MCF 10A (cell line): ENCODE measurements at regions of chr12 and their contacts with region 1.

Region 1: GRCh38 chr12:8544295-8544694 is 3.6 kb upstream of the CLEC4E start:
- DNase-seq: peak; percentile 56
- H3K4me3 Mint-ChIP-seq: no peak overlapping the region
- H3K27ac Mint-ChIP-seq: no peak overlapping the region
- H3K4me1 Mint-ChIP-seq: no peaks in the 10 kb centered on the region
- H3K27me3 Mint-ChIP-seq: peaks cover 58% of the 10 kb centered on the region
- CTCF ChIP-seq: peak; percentile 84

Region 2: GRCh38 chr12:8554451-8555195 is 10.3 kb after region 1 on chr12:
- CTCF ChIA-PET with region 1: interaction called, 19 read pairs
- POLR2A ChIA-PET with region 1: no interaction called
- intact Hi-C with region 1: no loop called
- DNase-seq: peak; percentile 35
- H3K4me3 Mint-ChIP-seq: no peak overlapping the region
- H3K27ac Mint-ChIP-seq: no peak overlapping the region
- H3K4me1 Mint-ChIP-seq: peaks cover 6% of the 10 kb centered on the region
- H3K27me3 Mint-ChIP-seq: no peaks in the 10 kb centered on the region
- CTCF ChIP-seq: no peak

Region 3: DNA sequence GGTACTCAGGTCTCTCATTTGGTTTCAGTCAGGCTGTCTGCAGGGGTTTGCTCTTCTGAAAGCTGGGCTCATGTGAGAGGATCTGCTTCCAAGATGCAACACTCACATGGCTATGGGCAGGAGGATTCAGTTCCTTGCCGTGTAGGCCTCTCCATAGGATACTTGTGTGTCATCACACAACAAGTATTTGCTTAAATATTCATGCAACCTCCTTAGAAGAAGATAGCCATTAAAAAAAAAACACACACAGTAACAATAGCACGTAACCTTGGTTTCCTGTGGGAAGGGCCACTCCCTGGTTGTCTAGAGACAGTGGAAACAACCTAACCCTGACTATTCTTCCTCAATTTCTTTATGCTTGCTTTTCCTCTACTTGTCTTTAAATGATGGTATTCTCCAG is 28.2 kb after region 1 on chr12:
- CTCF ChIA-PET with region 1: interaction called, 16 read pairs
- POLR2A ChIA-PET with region 1: no interaction called
- intact Hi-C with region 1: no loop called
- DNase-seq: no peak
- H3K4me3 Mint-ChIP-seq: no peak overlapping the region
- H3K27ac Mint-ChIP-seq: no peak overlapping the region
- H3K4me1 Mint-ChIP-seq: no peaks in the 10 kb centered on the region
- H3K27me3 Mint-ChIP-seq: peaks cover 21% of the 10 kb centered on the region
- CTCF ChIP-seq: no peak

Region 4: DNA sequence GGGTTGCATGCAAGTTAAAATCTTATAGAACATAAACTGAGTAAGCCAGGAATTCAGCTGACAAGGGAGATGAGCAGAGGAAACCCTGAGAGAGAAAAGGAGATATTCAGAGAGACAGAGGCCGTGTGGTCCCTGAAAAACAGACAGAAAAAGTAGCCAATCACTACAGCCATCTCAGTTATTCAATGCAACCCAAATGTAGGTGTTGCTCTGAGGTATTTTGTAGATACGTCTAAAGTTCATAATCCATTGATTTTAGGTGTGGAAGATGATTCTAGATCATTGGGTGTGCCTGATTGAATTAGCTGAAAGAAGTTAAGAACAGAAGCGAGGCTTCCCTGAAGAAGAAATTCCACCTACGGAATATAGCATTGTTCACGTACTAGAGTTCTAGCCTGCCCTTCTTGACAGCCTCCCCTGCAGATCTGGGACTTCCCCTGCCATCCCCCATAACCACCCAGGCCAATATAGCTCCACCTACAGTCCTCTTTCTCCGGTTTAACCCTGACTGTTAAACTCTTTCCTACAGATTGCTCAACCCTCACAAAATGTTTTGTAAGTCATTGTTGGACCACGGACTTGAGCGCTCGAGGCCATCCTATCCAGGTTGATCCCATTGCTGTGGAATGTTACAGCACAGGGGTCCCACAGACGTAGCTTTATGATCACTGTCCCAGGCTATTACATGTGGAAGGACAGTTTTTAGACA is 46.7 kb after region 1 on chr12:
- CTCF ChIA-PET with region 1: interaction called, 15 read pairs
- POLR2A ChIA-PET with region 1: no interaction called
- intact Hi-C with region 1: no loop called
- DNase-seq: peak; percentile 41
- H3K4me3 Mint-ChIP-seq: no peak overlapping the region
- H3K27ac Mint-ChIP-seq: no peak overlapping the region
- H3K4me1 Mint-ChIP-seq: no peaks in the 10 kb centered on the region
- H3K27me3 Mint-ChIP-seq: no peaks in the 10 kb centered on the region
- CTCF ChIP-seq: no peak

Region 5: GRCh38 chr12:8662593-8662992 is 118.3 kb after region 1 on chr12 and contains the start of gene MFAP5:
- CTCF ChIA-PET with region 1: interaction called, 14 read pairs
- POLR2A ChIA-PET with region 1: no interaction called
- intact Hi-C with region 1: no loop called
- DNase-seq: no peak
- H3K4me3 Mint-ChIP-seq: no peak within 1 kb of the TSS
- H3K27ac Mint-ChIP-seq: no peak within 1 kb of the TSS
- H3K4me1 Mint-ChIP-seq: peaks cover 5% of the 10 kb centered on the region
- H3K27me3 Mint-ChIP-seq: no peaks in the 10 kb centered on the region
- CTCF ChIP-seq: no peak
- total RNA-seq, gene MFAP5: 0.64 and 1.6 TPM in 2 replicates

Region 6: GRCh38 chr12:8697476-8698131 is 153.3 kb after region 1 on chr12 and contains the start of gene RIMKLB:
- CTCF ChIA-PET with region 1: no interaction called
- POLR2A ChIA-PET with region 1: no interaction called
- intact Hi-C with region 1: no loop called
- DNase-seq: peak; percentile 60
- H3K4me3 Mint-ChIP-seq: peak within 1 kb of the TSS; percentile 93
- H3K27ac Mint-ChIP-seq: peak within 1 kb of the TSS; percentile 46
- H3K4me1 Mint-ChIP-seq: peaks cover 13% of the 10 kb centered on the region
- H3K27me3 Mint-ChIP-seq: no peaks in the 10 kb centered on the region
- CTCF ChIP-seq: no peak
- total RNA-seq, gene RIMKLB: 32.7 and 34.4 TPM in 2 replicates

Region 7: GRCh38 chr12:9049520-9050133 is 505.3 kb after region 1 on chr12:
- CTCF ChIA-PET with region 1: interaction called, 29 read pairs
- POLR2A ChIA-PET with region 1: interaction called, 4 read pairs
- intact Hi-C with region 1: no loop called
- DNase-seq: peak; percentile 60
- H3K4me3 Mint-ChIP-seq: no peak overlapping the region
- H3K27ac Mint-ChIP-seq: no peak overlapping the region
- H3K4me1 Mint-ChIP-seq: no peaks in the 10 kb centered on the region
- H3K27me3 Mint-ChIP-seq: peaks cover 36% of the 10 kb centered on the region
- CTCF ChIP-seq: peak; percentile 40